ENCODE measurements at regions of chr1 and their contacts with region 1.

Region 1: DNA sequence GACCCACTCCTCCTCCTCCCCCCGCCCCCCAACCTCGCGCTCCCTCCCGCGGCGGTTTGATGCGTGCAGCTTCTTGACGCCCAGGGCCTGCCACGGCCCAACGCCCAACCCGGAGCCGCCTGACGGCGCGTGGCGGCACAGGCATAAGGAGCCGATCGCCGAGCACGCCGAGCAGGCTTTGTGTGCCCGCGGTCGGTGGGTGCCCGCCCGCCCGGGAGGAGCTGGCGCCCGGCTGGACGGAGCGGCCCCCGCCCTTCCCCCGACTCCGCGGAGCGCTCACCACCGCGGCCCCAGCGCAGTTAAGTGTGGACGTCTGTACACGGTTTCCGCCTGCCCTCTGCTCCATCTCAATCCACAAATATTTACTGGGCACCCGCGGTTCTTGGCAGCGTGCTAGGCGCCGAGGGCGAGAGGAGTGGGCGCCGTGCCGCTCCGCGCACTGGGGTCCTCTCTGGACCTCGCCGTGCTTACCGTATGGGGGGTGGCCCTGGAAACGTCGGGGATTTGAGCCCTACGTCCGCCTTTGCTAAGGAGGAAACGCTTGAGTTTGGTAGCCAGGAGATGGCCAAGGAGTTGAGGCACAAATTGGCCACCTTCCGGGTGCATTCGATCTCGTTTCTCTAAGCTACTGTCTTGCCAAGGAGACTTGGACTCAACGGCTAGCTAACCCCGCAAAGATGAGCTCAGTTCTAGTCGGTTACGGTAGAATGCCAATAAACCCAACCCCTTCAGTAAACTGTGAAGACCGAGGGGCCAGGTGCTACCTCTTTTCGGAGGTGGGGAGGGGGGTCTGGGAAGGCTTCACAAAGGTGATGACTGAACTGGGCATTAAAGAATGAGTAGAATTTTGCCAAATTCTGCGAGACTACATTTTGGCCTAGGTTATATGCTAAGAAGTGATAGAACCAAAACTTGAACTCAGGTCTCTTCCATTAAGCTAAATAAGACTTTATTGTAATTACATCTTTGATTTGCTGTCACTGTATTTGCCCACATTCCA is 583 bp upstream of the HDGF start:
- DNase-seq: peak; percentile 91 to 97 (median 96)
- H3K4me3 ChIP-seq: peak overlapping the region; percentile 92
- H3K4me3 Mint-ChIP-seq: peak overlapping the region; percentile 86 to 97 (median 92)
- H3K27ac ChIP-seq: peak overlapping the region; percentile 85
- H3K27ac Mint-ChIP-seq: peak overlapping the region; percentile 87 to 97 (median 93)
- H3K4me1 ChIP-seq: peaks cover 42% of the 10 kb centered on the region
- H3K4me1 Mint-ChIP-seq: peaks cover 45 to 62% (median 55%) of the 10 kb centered on the region in 3 donors
- H3K27me3 ChIP-seq: no peaks in the 10 kb centered on the region
- H3K27me3 Mint-ChIP-seq: no peaks in the 10 kb centered on the region

Region 2: GRCh38 chr1:156490401-156491032 is 261.5 kb before region 1 on chr1:
- CTCF ChIA-PET with region 1: no interaction called
- POLR2A ChIA-PET with region 1: no interaction called
- DNase-seq: no peak
- H3K4me3 ChIP-seq: peak overlapping the region; percentile 36
- H3K4me3 Mint-ChIP-seq: peak overlapping the region; percentile 52 to 87 (median 79)
- H3K27ac ChIP-seq: peak overlapping the region; percentile 69
- H3K27ac Mint-ChIP-seq: peak overlapping the region; percentile 91 to 100 (median 96)
- H3K4me1 ChIP-seq: peaks cover 95% of the 10 kb centered on the region
- H3K4me1 Mint-ChIP-seq: peaks cover 94 to 98% (median 97%) of the 10 kb centered on the region in 3 donors
- H3K27me3 ChIP-seq: no peaks in the 10 kb centered on the region
- H3K27me3 Mint-ChIP-seq: no peaks in the 10 kb centered on the region

Region 3: DNA sequence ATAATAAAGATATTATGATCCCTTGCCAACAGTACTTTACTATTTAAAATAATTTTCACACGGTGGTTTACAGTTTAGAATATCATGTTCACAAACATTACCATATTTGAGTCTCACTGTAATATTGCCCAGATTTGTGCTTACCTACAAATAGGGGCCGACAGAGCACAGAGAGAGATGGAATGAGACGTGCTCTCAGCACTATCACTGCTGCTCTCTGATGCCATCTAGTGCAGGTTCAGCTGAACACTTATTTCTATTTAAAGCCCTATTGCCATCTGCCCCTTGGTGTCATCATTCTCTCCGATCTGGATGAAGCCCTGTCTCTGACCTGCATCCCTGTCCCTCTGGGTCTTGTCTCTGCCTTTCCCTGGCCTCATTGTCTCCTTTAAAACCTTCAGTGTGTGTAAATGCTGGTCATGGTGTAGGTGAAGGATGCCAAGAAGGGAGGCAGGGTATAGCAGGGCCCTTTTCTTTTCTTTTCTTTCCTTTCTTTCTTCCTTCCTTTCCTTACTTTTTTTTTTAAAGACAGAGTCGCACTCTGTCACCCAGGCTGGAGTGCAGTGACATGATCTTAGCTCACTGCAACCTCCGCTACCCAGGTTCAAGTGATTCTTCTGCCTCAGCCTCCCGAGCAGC is 143.9 kb before region 1 on chr1:
- CTCF ChIA-PET with region 1: no interaction called
- POLR2A ChIA-PET with region 1: no interaction called
- DNase-seq: peak; percentile 32 to 73 (median 62)
- H3K4me3 ChIP-seq: no peak overlapping the region
- H3K4me3 Mint-ChIP-seq: peak overlapping the region in 2 of 7 donors; percentile 25 to 41
- H3K27ac ChIP-seq: no peak overlapping the region
- H3K27ac Mint-ChIP-seq: no peak overlapping the region
- H3K4me1 ChIP-seq: peaks cover 10% of the 10 kb centered on the region
- H3K4me1 Mint-ChIP-seq: peaks cover 6 to 15% (median 9%) of the 10 kb centered on the region in 3 donors
- H3K27me3 ChIP-seq: no peaks in the 10 kb centered on the region
- H3K27me3 Mint-ChIP-seq: peaks cover 5 to 26% of the 10 kb centered on the region in 2 donors

Region 4: GRCh38 chr1:156733989-156734584 is 18.0 kb before region 1 on chr1:
- CTCF ChIA-PET with region 1: interaction called, 8 read pairs
- POLR2A ChIA-PET with region 1: interaction called, 28 read pairs
- DNase-seq: no peak
- H3K4me3 ChIP-seq: no peak overlapping the region
- H3K4me3 Mint-ChIP-seq: no peak overlapping the region
- H3K27ac ChIP-seq: no peak overlapping the region
- H3K27ac Mint-ChIP-seq: peak overlapping the region in 1 of 8 donors; percentile 45
- H3K4me1 ChIP-seq: no peaks in the 10 kb centered on the region
- H3K4me1 Mint-ChIP-seq: peaks cover 13 to 22% (median 13%) of the 10 kb centered on the region in 3 donors
- H3K27me3 ChIP-seq: no peaks in the 10 kb centered on the region
- H3K27me3 Mint-ChIP-seq: peaks cover 0 to 2% of the 10 kb centered on the region in 2 donors

Region 5: GRCh38 chr1:156740679-156741612 is 11.1 kb before region 1 on chr1 and contains the start of gene MRPL24:
- CTCF ChIA-PET with region 1: interaction called, 8 read pairs
- POLR2A ChIA-PET with region 1: interaction called, 42 read pairs
- DNase-seq: peak; percentile 90 to 99 (median 97)
- H3K4me3 ChIP-seq: peak within 1 kb of the TSS; percentile 76
- H3K4me3 Mint-ChIP-seq: peak within 1 kb of the TSS; percentile 93 to 97 (median 94)
- H3K27ac ChIP-seq: peak within 1 kb of the TSS; percentile 62
- H3K27ac Mint-ChIP-seq: peak within 1 kb of the TSS; percentile 92 to 99 (median 98)
- H3K4me1 ChIP-seq: peaks cover 30% of the 10 kb centered on the region
- H3K4me1 Mint-ChIP-seq: peaks cover 27 to 41% (median 41%) of the 10 kb centered on the region in 3 donors
- H3K27me3 ChIP-seq: no peaks in the 10 kb centered on the region
- H3K27me3 Mint-ChIP-seq: no peaks in the 10 kb centered on the region
- total RNA-seq, gene MRPL24: 122 to 131 TPM

Region 6: GRCh38 chr1:156767101-156767878 is 15.2 kb after region 1 on chr1 and contains the start of gene PRCC:
- CTCF ChIA-PET with region 1: interaction called, 11 read pairs
- POLR2A ChIA-PET with region 1: interaction called, 16 read pairs
- DNase-seq: peak; percentile 93 to 99 (median 99)
- H3K4me3 ChIP-seq: peak within 1 kb of the TSS; percentile 85
- H3K4me3 Mint-ChIP-seq: no peak within 1 kb of the TSS
- H3K27ac ChIP-seq: peak within 1 kb of the TSS; percentile 97
- H3K27ac Mint-ChIP-seq: peak within 1 kb of the TSS in 2 of 8 donors; percentile 85 to 96
- H3K4me1 ChIP-seq: peaks cover 42% of the 10 kb centered on the region
- H3K4me1 Mint-ChIP-seq: peaks cover 28 to 46% (median 37%) of the 10 kb centered on the region in 3 donors
- H3K27me3 ChIP-seq: no peaks in the 10 kb centered on the region
- H3K27me3 Mint-ChIP-seq: peaks cover 0 to 1% of the 10 kb centered on the region in 2 donors
- total RNA-seq, gene PRCC: 106 to 111 TPM

Measured in CD8-positive, alpha-beta memory T cell (primary cell).